ENCODE measurements at regions of chr5 and their contacts with region 1.

Region 1: DNA sequence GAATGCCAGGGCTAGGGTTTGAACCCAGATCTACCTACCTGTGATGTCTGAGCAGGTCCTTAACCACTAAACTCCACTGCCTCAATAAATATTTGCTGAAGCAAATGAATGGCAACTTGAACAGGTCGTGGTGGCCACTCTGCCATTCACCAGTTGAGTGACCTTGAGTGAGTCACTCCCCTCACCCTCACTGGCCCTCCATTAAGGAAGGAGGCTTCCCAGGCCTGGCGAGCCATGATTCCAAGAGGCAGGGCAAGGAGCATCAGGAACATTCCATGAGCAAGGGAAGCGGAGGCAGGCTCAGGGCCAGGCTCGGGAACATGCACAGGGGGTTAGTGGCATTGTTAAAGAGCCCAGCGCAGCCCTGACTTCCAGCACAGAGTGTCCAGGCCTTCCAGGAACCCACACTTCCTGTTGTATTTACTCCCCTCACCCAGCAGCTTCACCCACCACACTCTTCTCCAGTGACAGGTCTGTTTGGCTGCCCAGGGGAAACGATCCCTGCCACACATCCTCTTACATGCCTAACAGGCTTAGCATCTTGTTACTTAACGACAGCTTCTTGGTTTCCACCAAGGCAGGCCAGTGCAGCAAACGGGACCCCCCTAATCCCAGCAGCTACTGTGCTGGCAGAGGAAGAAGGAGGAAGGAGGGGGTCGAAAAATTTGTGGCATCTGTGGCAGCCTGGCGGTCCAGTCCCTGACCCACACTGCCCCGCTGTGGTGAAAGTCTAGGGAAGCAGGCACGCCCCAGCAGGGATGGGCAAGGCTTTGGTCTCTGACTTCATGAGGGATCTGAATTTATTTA is 43.7 kb upstream of the TTC1 start:
- DNase-seq: peak; percentile 76 to 90 (median 80)
- H3K4me3 ChIP-seq: no peak overlapping the region
- H3K27ac ChIP-seq: no peak overlapping the region
- H3K4me1 ChIP-seq: peaks cover 0 to 2% (median 2%) of the 10 kb centered on the region in 3 donors
- H3K27me3 ChIP-seq: no peaks in the 10 kb centered on the region
- CTCF ChIP-seq: peak; percentile 63

Region 2: GRCh38 chr5:159444441-159445082 is 520.7 kb before region 1 on chr5:
- intact Hi-C with region 1: loop called (anchors 10 kb)
- DNase-seq: peak in 4 of 5 donors; percentile 16 to 88 (median 64)
- H3K4me3 ChIP-seq: no peak overlapping the region
- H3K27ac ChIP-seq: no peak overlapping the region
- H3K4me1 ChIP-seq: no peaks in the 10 kb centered on the region
- H3K27me3 ChIP-seq: no peaks in the 10 kb centered on the region
- CTCF ChIP-seq: peak; percentile 48

Region 3: GRCh38 chr5:160008877-160009590 is 43.8 kb after region 1 on chr5 and contains the start of gene TTC1:
- intact Hi-C with region 1: no loop called
- DNase-seq: peak; percentile 96 to 100 (median 97)
- H3K4me3 ChIP-seq: peak within 1 kb of the TSS; percentile 86 to 97 (median 97)
- H3K27ac ChIP-seq: peak within 1 kb of the TSS; percentile 38 to 64
- H3K4me1 ChIP-seq: peaks cover 0 to 12% (median 0%) of the 10 kb centered on the region in 3 donors
- H3K27me3 ChIP-seq: no peaks in the 10 kb centered on the region
- CTCF ChIP-seq: no peak
- total RNA-seq, gene TTC1: 41.4 TPM

Measured in kidney (tissue), 22 donors.